Activated CD4-positive, alpha-beta T cell treated with anti-CD3 and anti-CD28 coated beads for 36 hours (primary cell): ENCODE measurements at regions of chr5 and their contacts with region 1.

Region 1: GRCh38 chr5:121962347-121962670 is 534 bp downstream of the SRFBP1 start:
- DNase-seq: no peak
- ATAC-seq: peak; percentile 31
- H3K4me3 Mint-ChIP-seq: peak overlapping the region; percentile 94
- H3K27ac Mint-ChIP-seq: peak overlapping the region; percentile 98
- H3K4me1 Mint-ChIP-seq: peaks cover 40% of the 10 kb centered on the region
- H3K27me3 Mint-ChIP-seq: peaks cover 4% of the 10 kb centered on the region

Region 2: GRCh38 chr5:121949867-121950266 is 12.4 kb before region 1 on chr5:
- CTCF ChIA-PET with region 1: interaction called, 14 read pairs
- POLR2A ChIA-PET with region 1: no interaction called
- intact Hi-C with region 1: no loop called
- DNase-seq: peak; percentile 35
- ATAC-seq: no peak
- H3K4me3 Mint-ChIP-seq: no peak overlapping the region
- H3K27ac Mint-ChIP-seq: no peak overlapping the region
- H3K4me1 Mint-ChIP-seq: no peaks in the 10 kb centered on the region
- H3K27me3 Mint-ChIP-seq: peaks cover 9% of the 10 kb centered on the region

Region 3: GRCh38 chr5:121982146-121982892 is 20.0 kb after region 1 on chr5:
- CTCF ChIA-PET with region 1: no interaction called
- POLR2A ChIA-PET with region 1: no interaction called
- intact Hi-C with region 1: no loop called
- DNase-seq: no peak
- ATAC-seq: no peak
- H3K4me3 Mint-ChIP-seq: no peak overlapping the region
- H3K27ac Mint-ChIP-seq: no peak overlapping the region
- H3K4me1 Mint-ChIP-seq: peaks cover 31% of the 10 kb centered on the region
- H3K27me3 Mint-ChIP-seq: no peaks in the 10 kb centered on the region

Region 4: GRCh38 chr5:122019919-122020590 is 57.7 kb after region 1 on chr5:
- CTCF ChIA-PET with region 1: no interaction called
- POLR2A ChIA-PET with region 1: no interaction called
- intact Hi-C with region 1: loop called in 1 of 2 experiments (anchors 2 kb)
- DNase-seq: no peak
- ATAC-seq: peak; percentile 95
- H3K4me3 Mint-ChIP-seq: peak overlapping the region; percentile 20
- H3K27ac Mint-ChIP-seq: peak overlapping the region; percentile 73
- H3K4me1 Mint-ChIP-seq: peaks cover 10% of the 10 kb centered on the region
- H3K27me3 Mint-ChIP-seq: no peaks in the 10 kb centered on the region

Region 5: GRCh38 chr5:122774861-122775549 is 812.7 kb after region 1 on chr5 and contains the start of gene SNX2:
- CTCF ChIA-PET with region 1: interaction called, 3 read pairs
- POLR2A ChIA-PET with region 1: no interaction called
- intact Hi-C with region 1: loop called in 1 of 2 experiments (anchors 5 kb)
- DNase-seq: peak; percentile 95
- ATAC-seq: peak; percentile 94
- H3K4me3 Mint-ChIP-seq: peak within 1 kb of the TSS; percentile 94
- H3K27ac Mint-ChIP-seq: peak within 1 kb of the TSS; percentile 91
- H3K4me1 Mint-ChIP-seq: peaks cover 30% of the 10 kb centered on the region
- H3K27me3 Mint-ChIP-seq: peaks cover under 1% of the 10 kb centered on the region
- total RNA-seq, gene SNX2: 50.2 to 56.0 TPM

Region 6: DNA sequence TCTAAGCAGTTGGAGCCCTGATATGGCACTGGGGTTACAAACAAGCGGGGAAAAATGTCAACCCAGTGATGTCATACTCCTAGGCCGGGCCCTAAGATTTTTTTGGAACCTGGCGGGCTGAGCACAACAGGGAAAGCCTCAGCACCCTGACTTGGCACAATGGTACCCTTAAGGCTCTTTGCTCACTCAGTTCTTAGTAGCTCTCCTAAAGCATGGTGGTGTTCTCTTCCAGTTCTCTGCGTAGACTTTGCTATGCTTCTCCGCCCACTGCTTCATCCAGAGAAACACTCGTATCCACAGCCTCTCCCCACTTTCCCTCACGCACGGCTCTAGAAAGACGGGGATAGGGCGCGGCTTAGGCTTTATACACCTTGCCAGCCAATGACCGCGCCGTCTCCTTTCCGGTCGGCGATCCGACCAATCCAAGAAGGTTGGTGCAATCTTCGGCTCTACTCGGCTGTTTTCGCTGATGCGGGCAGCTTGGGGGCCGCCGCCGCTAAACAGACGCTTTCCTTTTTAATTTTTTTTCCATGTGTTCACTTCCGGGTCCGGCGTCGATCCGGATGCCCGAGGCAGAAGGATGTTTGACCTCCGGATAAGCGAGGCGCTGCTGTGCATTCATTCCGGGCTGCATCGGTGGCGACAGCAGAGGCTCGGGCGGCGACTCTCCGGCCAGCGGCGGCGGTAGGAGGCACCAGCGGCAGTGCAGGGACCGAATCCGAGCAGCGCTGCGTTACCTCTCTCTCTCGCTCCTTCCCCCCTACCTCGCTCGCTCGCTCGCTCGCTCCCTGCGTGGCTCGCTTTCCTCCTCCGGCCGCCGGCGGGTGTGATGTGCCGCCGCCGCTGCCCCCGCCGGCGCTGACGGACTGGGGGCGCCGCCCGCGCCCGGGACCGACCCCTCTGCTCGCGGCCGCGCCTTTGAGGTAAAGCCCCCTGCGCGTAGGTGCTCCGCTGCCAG is 1549.6 kb after region 1 on chr5 and contains the start of gene CSNK1G3:
- CTCF ChIA-PET with region 1: no interaction called
- POLR2A ChIA-PET with region 1: no interaction called
- intact Hi-C with region 1: loop called (anchors 5 kb)
- DNase-seq: peak; percentile 96
- ATAC-seq: peak; percentile 94
- H3K4me3 Mint-ChIP-seq: peak within 1 kb of the TSS; percentile 92
- H3K27ac Mint-ChIP-seq: peak within 1 kb of the TSS; percentile 97
- H3K4me1 Mint-ChIP-seq: peaks cover 45% of the 10 kb centered on the region
- H3K27me3 Mint-ChIP-seq: peaks cover 4% of the 10 kb centered on the region
- total RNA-seq, gene CSNK1G3: 30.6 to 31.5 TPM